ENCODE measurements at regions of chr18 and their contacts with region 1.

Region 1: GRCh38 chr18:56575819-56576663 is 62.4 kb downstream of the TXNL1 start:
- DNase-seq: peak in 2 of 7 donors; percentile 21 to 35
- H3K4me3 ChIP-seq: no peak overlapping the region
- H3K27ac ChIP-seq: no peak overlapping the region
- H3K4me1 ChIP-seq: peaks cover 17 to 20% of the 10 kb centered on the region in 2 donors
- H3K27me3 ChIP-seq: no peaks in the 10 kb centered on the region
- CTCF ChIP-seq: peak; percentile 45 to 88 (median 82)
- POLR2A ChIP-seq: no peak

Region 2: GRCh38 chr18:55415258-55415871 is 1160.7 kb before region 1 on chr18:
- intact Hi-C with region 1: loop called in 1 of 2 experiments (anchors 10 kb)
- DNase-seq: peak; percentile 78 to 95 (median 89)
- H3K4me3 ChIP-seq: no peak overlapping the region
- H3K27ac ChIP-seq: no peak overlapping the region
- H3K4me1 ChIP-seq: peaks cover 0 to 4% of the 10 kb centered on the region in 2 donors
- H3K27me3 ChIP-seq: no peaks in the 10 kb centered on the region
- CTCF ChIP-seq: peak; percentile 74 to 97 (median 88)
- POLR2A ChIP-seq: no peak

Region 3: GRCh38 chr18:55988537-55988936 is 587.5 kb before region 1 on chr18:
- intact Hi-C with region 1: loop called in 1 of 2 experiments (anchors 10 kb)
- DNase-seq: peak in 1 of 7 donors; percentile 11
- H3K4me3 ChIP-seq: no peak overlapping the region
- H3K27ac ChIP-seq: peak overlapping the region in 1 of 5 donors; percentile 40
- H3K4me1 ChIP-seq: no peaks in the 10 kb centered on the region
- H3K27me3 ChIP-seq: no peaks in the 10 kb centered on the region
- CTCF ChIP-seq: no peak
- POLR2A ChIP-seq: no peak

Measured in adrenal gland (tissue), 19 donors.